GM13976 (cell line): ENCODE measurements at regions of chrX and their contacts with region 1.

Region 1: DNA sequence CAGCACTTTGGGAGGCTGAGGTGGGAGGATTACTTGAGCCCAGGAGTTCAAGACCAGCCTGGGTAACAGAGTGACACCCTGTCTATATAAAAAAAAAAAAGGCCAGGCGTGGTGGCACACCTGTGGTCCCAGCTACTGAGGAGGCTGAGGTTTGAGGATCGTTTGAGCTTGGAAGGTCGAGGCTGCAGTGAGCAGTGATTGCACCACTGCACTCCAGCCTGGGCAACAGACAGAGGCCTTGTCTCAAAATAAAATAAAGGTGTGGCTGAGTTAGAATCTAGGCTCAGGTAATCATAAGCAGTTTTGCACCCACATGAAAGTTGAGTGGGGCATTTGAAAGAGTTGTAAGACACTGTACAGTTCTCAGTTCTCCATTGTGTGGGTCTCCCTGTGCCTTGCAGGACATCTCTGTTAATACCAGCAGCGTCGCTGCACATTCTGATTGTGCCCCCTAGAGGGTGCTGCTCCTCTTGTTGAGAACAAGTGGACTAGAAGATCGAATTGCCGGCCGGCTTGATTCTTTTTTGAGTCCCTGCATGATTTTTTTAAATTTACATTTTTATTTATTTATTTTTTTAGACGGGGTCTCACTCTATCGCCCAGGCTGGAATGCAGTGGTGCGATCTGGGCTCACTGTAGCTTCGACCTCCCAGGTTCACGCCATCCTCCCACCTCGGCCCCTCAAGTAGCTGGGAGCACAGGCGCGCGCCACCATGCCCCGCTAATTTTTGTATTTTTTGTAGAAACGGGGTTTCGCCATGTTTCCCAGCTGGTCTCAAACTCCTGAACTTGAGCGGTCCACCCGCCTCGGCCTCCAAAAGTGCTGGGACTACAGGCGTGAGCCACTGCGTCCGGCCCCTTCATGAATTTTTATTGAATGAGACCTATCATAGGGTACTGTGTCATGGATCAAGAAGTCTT is 73.6 kb upstream of the RBMX start:
- DNase-seq: peak; percentile 60
- CTCF ChIP-seq: peak; percentile 66

Region 2: GRCh38 chrX:136747003-136747986 is 206.8 kb before region 1 on chrX:
- in situ Hi-C with region 1: no loop called
- DNase-seq: no peak
- CTCF ChIP-seq: no peak

Region 3: DNA sequence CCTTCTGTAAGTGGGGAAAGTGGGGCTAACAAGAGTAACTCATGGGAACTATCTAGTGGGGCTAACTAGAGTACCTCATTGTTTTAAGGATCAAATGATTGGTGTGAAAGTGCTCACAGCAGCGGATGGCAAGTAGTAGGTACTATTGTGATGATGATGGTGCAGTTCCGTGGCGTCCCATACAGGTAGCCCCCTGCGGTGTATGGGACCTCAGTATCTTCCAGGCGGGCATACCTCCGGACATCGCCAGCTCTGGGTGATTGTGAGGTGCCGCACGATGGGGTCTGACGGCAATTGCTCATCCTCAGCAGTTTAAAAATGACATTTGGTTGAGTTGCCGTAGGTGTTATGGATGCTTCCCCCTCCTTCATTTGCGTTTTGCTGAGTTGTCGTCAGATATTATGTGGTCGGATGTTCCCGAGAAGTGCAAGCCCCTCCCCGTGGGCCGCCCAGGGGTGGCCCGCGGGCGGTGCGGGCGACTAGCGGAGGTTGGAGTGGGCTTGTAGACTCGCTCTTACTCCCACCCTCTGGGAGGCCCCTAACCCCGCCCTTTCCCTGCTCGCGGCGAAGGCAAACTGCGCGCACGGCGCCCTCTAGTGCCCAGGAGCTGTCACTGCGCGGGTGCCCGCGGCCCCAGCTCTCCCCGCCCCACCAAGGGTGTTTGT is 98.0 kb after region 1 on chrX:
- in situ Hi-C with region 1: loop called (anchors 10 kb)
- DNase-seq: peak; percentile 82
- CTCF ChIP-seq: peak; percentile 89

Region 4: GRCh38 chrX:137151403-137151802 is 197.3 kb after region 1 on chrX:
- in situ Hi-C with region 1: no loop called
- DNase-seq: no peak
- CTCF ChIP-seq: no peak